Caco-2 (cell line): ENCODE measurements at regions of chr12 and their contacts with region 1.

Region 1: DNA sequence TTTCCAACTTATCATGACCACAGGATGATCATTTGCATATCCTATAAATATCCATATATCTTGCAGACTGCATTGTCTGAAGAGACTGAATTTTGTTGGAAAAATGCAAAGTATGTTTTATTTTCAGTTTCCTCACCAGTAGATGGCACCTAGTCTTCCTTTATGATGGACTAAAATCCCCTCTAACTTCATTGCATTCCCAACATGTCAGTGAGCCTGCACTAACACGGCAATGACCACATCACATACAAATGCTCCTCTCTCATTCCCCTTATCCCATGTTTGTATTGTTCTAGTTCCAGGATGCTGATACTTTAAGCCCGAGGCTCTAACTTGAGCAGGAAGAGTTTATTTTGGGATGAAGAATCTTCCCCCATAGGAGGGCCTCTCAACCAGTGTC is 24.7 kb upstream of the MYBPC1 start:
- DNase-seq: peak; percentile 41 to 49
- H3K4me3 ChIP-seq: no peak overlapping the region
- H3K4me3 Mint-ChIP-seq: peak overlapping the region; percentile 7
- H3K27ac Mint-ChIP-seq: no peak overlapping the region
- H3K4me1 ChIP-seq: no peaks in the 10 kb centered on the region
- H3K4me1 Mint-ChIP-seq: peaks cover 8% of the 10 kb centered on the region
- H3K27me3 ChIP-seq: no peaks in the 10 kb centered on the region
- H3K27me3 Mint-ChIP-seq: no peaks in the 10 kb centered on the region
- CTCF ChIP-seq: peak; percentile 51 to 52

Region 2: DNA sequence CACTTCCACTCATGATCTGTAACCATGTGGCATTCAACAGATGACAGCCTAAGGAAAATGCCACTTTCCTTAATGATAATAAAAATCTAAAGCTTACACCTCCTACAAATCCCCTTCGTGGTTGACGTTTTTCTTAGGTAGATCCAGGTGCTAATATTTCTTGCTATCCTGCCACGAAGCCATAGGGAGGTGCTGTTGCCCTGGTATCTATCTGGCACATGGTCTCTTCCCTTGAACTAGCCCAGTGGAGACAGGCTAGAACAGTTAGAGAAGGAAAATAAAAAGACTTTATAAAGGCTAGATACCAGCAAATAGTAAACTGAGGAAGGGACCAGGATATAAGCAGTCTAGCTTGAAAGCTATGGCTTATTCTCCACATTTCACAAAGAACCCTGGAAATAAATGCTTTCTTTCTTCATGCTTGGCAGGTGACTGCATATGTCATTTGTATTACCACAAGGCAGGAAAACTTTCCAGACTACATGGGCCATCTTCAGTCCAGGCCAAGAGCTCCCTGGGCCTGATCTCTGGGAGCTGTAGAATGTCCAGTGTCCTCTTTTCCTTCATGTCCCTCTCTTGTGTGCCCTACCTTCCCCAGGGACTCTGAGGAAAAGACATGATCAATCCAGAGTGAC is 79.6 kb before region 1 on chr12:
- CTCF ChIA-PET with region 1: no interaction called
- POLR2A ChIA-PET with region 1: no interaction called
- intact Hi-C with region 1: loop called (anchors 1 kb)
- DNase-seq: peak; percentile 44 to 55
- H3K4me3 ChIP-seq: no peak overlapping the region
- H3K4me3 Mint-ChIP-seq: no peak overlapping the region
- H3K27ac Mint-ChIP-seq: no peak overlapping the region
- H3K4me1 ChIP-seq: 0 out of 2 replicates have a peak, but pooled peaks cover 3% of the 10 kb centered on the region
- H3K4me1 Mint-ChIP-seq: no peaks in the 10 kb centered on the region
- H3K27me3 ChIP-seq: no peaks in the 10 kb centered on the region
- H3K27me3 Mint-ChIP-seq: no peaks in the 10 kb centered on the region
- CTCF ChIP-seq: peak; percentile 58 to 80

Region 3: GRCh38 chr12:101616027-101616494 is 46.0 kb after region 1 on chr12:
- CTCF ChIA-PET with region 1: no interaction called
- POLR2A ChIA-PET with region 1: no interaction called
- intact Hi-C with region 1: no loop called
- DNase-seq: no peak
- H3K4me3 ChIP-seq: no peak overlapping the region
- H3K4me3 Mint-ChIP-seq: no peak overlapping the region
- H3K27ac Mint-ChIP-seq: peak overlapping the region; percentile 7
- H3K4me1 ChIP-seq: peaks cover 18% of the 10 kb centered on the region
- H3K4me1 Mint-ChIP-seq: peaks cover 23% of the 10 kb centered on the region
- H3K27me3 ChIP-seq: no peaks in the 10 kb centered on the region
- H3K27me3 Mint-ChIP-seq: no peaks in the 10 kb centered on the region
- CTCF ChIP-seq: no peak

Region 4: DNA sequence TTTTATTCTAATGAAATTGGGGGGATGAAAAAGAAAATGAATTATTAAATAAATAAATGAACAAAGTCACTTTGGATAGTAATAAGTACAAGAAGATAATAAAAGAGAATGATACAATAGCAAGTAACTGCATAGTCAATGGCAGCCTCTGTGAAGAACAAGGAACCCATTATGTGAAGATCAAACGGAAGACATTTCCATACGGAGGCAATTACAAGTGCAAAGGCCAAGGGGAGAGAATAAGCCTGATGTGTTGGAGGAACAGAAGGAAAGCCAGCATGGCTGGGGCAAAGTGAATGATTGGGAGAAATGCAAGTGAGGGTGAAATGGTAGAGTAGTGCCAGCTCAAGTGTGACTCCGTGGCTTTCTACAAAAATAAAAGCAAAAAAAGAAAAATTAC is 83.5 kb after region 1 on chr12:
- CTCF ChIA-PET with region 1: no interaction called
- POLR2A ChIA-PET with region 1: no interaction called
- intact Hi-C with region 1: loop called (anchors 2 kb)
- DNase-seq: no peak
- H3K4me3 ChIP-seq: no peak overlapping the region
- H3K4me3 Mint-ChIP-seq: no peak overlapping the region
- H3K27ac Mint-ChIP-seq: no peak overlapping the region
- H3K4me1 ChIP-seq: no peaks in the 10 kb centered on the region
- H3K4me1 Mint-ChIP-seq: peaks cover 13% of the 10 kb centered on the region
- H3K27me3 ChIP-seq: no peaks in the 10 kb centered on the region
- H3K27me3 Mint-ChIP-seq: no peaks in the 10 kb centered on the region
- CTCF ChIP-seq: no peak

Region 5: DNA sequence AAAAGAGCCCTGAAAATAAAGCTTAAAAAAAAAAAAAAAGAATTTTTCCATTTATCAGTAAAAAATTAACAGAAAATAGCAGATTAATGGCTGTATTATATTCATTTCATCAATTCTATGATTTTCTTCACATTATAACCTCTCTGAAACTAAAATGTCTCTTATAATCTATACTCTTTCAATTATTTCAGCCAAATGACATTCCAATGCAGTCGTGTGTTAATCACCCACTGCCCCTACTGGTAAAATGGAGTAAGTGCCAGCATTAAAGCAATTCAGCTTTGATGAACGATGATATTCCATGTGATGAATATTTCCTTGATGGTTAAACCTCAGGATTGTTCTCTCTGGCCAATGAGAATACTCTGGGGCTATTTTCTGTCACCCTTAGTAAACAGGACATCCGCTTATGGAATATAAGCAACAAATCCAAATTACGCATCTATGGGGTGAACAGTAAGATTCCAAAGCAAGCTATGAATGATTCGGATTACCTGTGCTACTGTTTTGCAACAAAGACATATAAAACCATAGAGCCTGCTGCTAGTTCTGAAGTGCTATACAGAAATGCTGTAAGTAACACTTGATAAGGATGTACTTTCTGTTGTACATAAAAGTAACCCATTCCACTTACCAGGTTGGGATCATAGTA is 189.5 kb after region 1 on chr12:
- CTCF ChIA-PET with region 1: no interaction called
- POLR2A ChIA-PET with region 1: no interaction called
- intact Hi-C with region 1: loop called (anchors 1 kb)
- DNase-seq: peak in 1 of 2 experiments; percentile 33
- H3K4me3 ChIP-seq: no peak overlapping the region
- H3K4me3 Mint-ChIP-seq: no peak overlapping the region
- H3K27ac Mint-ChIP-seq: no peak overlapping the region
- H3K4me1 ChIP-seq: no peaks in the 10 kb centered on the region
- H3K4me1 Mint-ChIP-seq: peaks cover 5% of the 10 kb centered on the region
- H3K27me3 ChIP-seq: no peaks in the 10 kb centered on the region
- H3K27me3 Mint-ChIP-seq: no peaks in the 10 kb centered on the region
- CTCF ChIP-seq: peak; percentile 59 to 73

Region 6: GRCh38 chr12:101839324-101840283 is 269.6 kb after region 1 on chr12:
- CTCF ChIA-PET with region 1: no interaction called
- POLR2A ChIA-PET with region 1: no interaction called
- intact Hi-C with region 1: loop called (anchors 1 kb)
- DNase-seq: peak; percentile 59 to 78
- H3K4me3 ChIP-seq: no peak overlapping the region
- H3K4me3 Mint-ChIP-seq: no peak overlapping the region
- H3K27ac Mint-ChIP-seq: no peak overlapping the region
- H3K4me1 ChIP-seq: no peaks in the 10 kb centered on the region
- H3K4me1 Mint-ChIP-seq: no peaks in the 10 kb centered on the region
- H3K27me3 ChIP-seq: no peaks in the 10 kb centered on the region
- H3K27me3 Mint-ChIP-seq: no peaks in the 10 kb centered on the region
- CTCF ChIP-seq: peak; percentile 78 to 90